Activated CD4-positive, alpha-beta T cell treated with anti-CD3 and anti-CD28 coated beads for 36 hours (primary cell): ENCODE measurements at regions of chr3 and their contacts with region 1.

Region 1: GRCh38 chr3:71087143-71088018 is 496.1 kb downstream of the FOXP1 start:
- DNase-seq: peak; percentile 61
- ATAC-seq: peak; percentile 74
- H3K4me3 Mint-ChIP-seq: peak overlapping the region; percentile 52
- H3K27ac Mint-ChIP-seq: peak overlapping the region; percentile 93
- H3K4me1 Mint-ChIP-seq: peaks cover 94% of the 10 kb centered on the region
- H3K27me3 Mint-ChIP-seq: no peaks in the 10 kb centered on the region

Region 2: DNA sequence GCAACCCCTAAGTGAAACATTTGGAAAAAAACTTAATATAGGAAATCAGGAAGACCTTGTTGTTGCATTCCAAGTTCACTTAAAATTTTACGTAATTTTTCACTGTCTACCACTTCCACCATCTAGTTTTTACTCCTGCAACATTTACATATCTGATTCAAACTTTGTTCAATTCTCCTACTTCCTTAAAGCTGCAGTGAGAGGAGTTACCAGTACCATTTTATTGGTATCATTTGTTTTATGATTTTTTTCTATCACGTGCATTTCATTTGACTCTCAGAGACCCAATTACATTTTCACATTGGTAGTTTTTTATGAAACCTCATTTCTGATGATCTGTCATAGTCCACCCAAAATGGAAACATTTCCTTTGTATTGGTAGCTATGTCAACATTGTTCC is 490.1 kb before region 1 on chr3:
- CTCF ChIA-PET with region 1: no interaction called
- POLR2A ChIA-PET with region 1: no interaction called
- intact Hi-C with region 1: no loop called
- DNase-seq: no peak
- ATAC-seq: no peak
- H3K4me3 Mint-ChIP-seq: no peak overlapping the region
- H3K27ac Mint-ChIP-seq: no peak overlapping the region
- H3K4me1 Mint-ChIP-seq: no peaks in the 10 kb centered on the region
- H3K27me3 Mint-ChIP-seq: peaks cover 23% of the 10 kb centered on the region

Region 3: GRCh38 chr3:70947579-70947978 is 139.8 kb before region 1 on chr3:
- CTCF ChIA-PET with region 1: no interaction called
- POLR2A ChIA-PET with region 1: no interaction called
- intact Hi-C with region 1: no loop called
- DNase-seq: no peak
- ATAC-seq: no peak
- H3K4me3 Mint-ChIP-seq: no peak overlapping the region
- H3K27ac Mint-ChIP-seq: no peak overlapping the region
- H3K4me1 Mint-ChIP-seq: peaks cover 3% of the 10 kb centered on the region
- H3K27me3 Mint-ChIP-seq: peaks cover 8% of the 10 kb centered on the region

Region 4: DNA sequence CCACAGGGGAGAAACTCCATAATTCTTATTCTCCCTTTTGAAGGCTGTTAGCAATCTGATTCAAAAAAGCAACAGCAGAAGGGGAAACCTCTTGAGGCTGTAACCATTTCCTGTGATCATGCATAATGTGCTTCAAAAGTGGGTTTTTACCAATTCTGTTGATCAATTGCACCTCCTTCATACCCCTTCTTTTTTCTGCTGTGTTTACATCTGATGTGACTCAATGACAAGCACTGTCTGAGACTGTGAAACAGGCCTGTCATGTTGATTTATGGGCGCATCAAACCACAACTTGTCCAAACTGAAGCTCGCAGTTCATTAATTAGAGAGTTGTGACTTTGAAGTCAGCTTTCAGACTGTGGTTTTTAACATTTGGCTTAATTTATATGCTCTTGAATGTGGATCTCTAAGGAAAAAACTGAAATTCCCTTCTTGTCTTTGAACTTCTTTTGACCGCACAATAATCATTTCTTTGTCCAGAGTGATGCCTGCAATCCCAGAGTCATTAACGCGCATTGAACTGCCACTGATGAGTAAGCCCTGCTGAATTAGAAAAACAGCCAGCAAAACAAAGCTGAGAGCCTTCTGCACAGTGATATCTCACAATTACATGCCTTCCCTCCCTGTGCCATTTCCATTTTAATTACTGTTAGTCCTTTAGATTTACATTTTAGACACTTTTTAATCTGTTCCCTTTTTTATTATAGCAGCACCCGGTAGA is 36.7 kb before region 1 on chr3:
- CTCF ChIA-PET with region 1: interaction called, 3 read pairs
- POLR2A ChIA-PET with region 1: interaction called, 3 read pairs
- intact Hi-C with region 1: loop called in 1 of 2 experiments (anchors 1 kb)
- DNase-seq: peak; percentile 65
- ATAC-seq: peak; percentile 87
- H3K4me3 Mint-ChIP-seq: peak overlapping the region; percentile 36
- H3K27ac Mint-ChIP-seq: peak overlapping the region; percentile 92
- H3K4me1 Mint-ChIP-seq: peaks cover 100% of the 10 kb centered on the region
- H3K27me3 Mint-ChIP-seq: no peaks in the 10 kb centered on the region

Region 5: DNA sequence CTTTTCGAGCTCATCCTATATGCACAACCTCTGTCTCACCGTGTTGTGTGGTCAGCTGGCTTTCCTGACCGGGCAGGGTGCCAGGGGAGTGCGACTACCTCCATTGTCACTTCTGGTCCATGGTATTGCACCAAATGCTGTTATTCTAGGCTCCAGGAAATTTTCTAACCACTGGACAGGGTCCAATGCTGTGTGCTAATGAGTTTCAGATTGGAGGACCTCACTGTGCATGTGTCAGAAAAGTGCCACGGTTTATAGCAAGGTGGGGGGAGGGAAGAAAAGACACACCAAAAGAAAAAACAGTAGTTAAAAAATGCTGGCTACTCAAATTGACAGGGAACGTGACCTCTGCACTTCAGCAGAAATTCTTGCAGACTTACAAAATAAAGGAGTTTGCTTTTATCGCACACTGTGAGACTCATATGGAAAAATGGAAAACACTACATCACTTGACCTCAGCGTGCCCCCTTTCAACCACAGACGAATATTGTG is 16.1 kb after region 1 on chr3:
- CTCF ChIA-PET with region 1: interaction called, 15 read pairs
- POLR2A ChIA-PET with region 1: interaction called, 10 read pairs
- intact Hi-C with region 1: loop called in 1 of 2 experiments (anchors 2 kb)
- DNase-seq: no peak
- ATAC-seq: no peak
- H3K4me3 Mint-ChIP-seq: no peak overlapping the region
- H3K27ac Mint-ChIP-seq: peak overlapping the region; percentile 76
- H3K4me1 Mint-ChIP-seq: peaks cover 96% of the 10 kb centered on the region
- H3K27me3 Mint-ChIP-seq: no peaks in the 10 kb centered on the region

Region 6: DNA sequence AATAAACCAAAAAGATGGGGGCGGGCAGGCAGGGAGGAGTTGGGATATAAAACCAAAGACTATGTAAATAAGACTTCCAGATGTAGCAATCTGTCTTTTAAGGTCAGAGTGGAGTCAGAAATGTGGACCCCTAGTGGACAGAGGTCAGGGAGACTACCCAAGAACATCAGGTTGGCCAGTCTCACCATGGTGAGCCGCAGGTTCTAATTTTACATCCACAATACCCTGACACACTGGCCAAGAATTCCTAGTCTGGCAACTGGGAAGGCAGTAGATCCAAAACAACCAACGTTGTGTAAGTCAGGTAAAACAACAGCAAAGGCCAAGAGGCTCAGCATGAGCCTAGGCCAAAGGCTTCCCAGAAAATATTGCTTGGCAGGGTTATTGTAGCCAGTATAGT is 292.7 kb after region 1 on chr3:
- CTCF ChIA-PET with region 1: no interaction called
- POLR2A ChIA-PET with region 1: no interaction called
- intact Hi-C with region 1: loop called (anchors 2 to 5 kb)
- DNase-seq: no peak
- ATAC-seq: no peak
- H3K4me3 Mint-ChIP-seq: no peak overlapping the region
- H3K27ac Mint-ChIP-seq: peak overlapping the region; percentile 7
- H3K4me1 Mint-ChIP-seq: peaks cover 91% of the 10 kb centered on the region
- H3K27me3 Mint-ChIP-seq: no peaks in the 10 kb centered on the region

Region 7: GRCh38 chr3:71495708-71496472 is 408.5 kb after region 1 on chr3:
- CTCF ChIA-PET with region 1: no interaction called
- POLR2A ChIA-PET with region 1: no interaction called
- intact Hi-C with region 1: loop called in 1 of 2 experiments (anchors 5 kb)
- DNase-seq: peak; percentile 47
- ATAC-seq: peak; percentile 71
- H3K4me3 Mint-ChIP-seq: peak overlapping the region; percentile 56
- H3K27ac Mint-ChIP-seq: peak overlapping the region; percentile 89
- H3K4me1 Mint-ChIP-seq: peaks cover 75% of the 10 kb centered on the region
- H3K27me3 Mint-ChIP-seq: no peaks in the 10 kb centered on the region

Region 8: DNA sequence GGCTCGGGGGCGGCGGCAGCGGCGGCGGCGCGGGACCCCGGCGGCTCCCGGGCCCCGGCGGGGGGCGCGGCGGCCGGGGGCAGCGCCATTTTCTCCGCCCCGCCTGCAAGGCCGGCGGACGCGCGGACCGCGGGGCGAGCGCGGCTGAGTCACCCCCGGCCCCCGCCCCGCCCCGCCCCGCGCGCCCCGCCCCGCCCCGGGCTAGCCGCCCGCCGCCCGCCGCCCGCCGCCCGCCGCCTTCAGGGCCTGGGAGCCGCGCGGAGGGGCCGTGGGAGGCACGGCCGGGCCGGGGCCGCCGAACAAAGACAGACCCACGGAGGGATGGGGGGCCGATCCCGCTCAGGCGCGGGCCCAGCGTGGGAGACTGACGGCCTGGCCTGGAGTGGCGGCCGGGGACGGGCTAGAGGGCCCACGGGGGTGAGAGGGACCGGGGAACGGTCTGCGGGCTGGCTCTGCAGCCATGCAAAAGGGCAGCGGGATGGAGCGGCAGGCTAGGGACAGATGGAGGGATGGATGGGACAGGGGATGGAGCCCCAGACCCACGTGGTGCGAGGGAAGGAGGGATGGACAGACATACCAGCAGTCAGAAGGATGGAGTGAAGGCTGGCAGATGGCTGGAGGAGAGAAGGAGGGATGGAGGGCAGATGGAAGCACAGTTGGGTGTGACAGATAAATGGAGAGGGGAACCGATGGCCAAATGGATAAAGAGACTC is 638.1 kb after region 1 on chr3 and contains the start of gene EIF4E3:
- CTCF ChIA-PET with region 1: no interaction called
- POLR2A ChIA-PET with region 1: no interaction called
- intact Hi-C with region 1: no loop called
- DNase-seq: peak; percentile 65
- ATAC-seq: peak; percentile 34
- H3K4me3 Mint-ChIP-seq: peak within 1 kb of the TSS; percentile 91
- H3K27ac Mint-ChIP-seq: peak within 1 kb of the TSS; percentile 95
- H3K4me1 Mint-ChIP-seq: peaks cover 67% of the 10 kb centered on the region
- H3K27me3 Mint-ChIP-seq: no peaks in the 10 kb centered on the region
- total RNA-seq, gene EIF4E3: 28.7 to 29.7 TPM